SK-N-SH (cell line): ENCODE measurements at regions of chr20 and their contacts with region 1.

Region 1: GRCh38 chr20:53547664-53548239 is 45.9 kb downstream of the ZNF217 start:
- DNase-seq: peak; percentile 71
- H3K4me3 ChIP-seq: peak overlapping the region in 1 of 2 experiments; percentile 9; a peak in 1 of 4 replicates
- H3K27ac ChIP-seq: 0 out of 4 replicates have a peak overlapping the region, but pooled peaks of 1 of the 2 experiments have one; percentile 3
- H3K4me1 ChIP-seq: peaks cover 0 to 4% of the 10 kb centered on the region in 2 experiments; a peak in 1 of 4 replicates
- H3K27me3 ChIP-seq: no peaks in the 10 kb centered on the region
- CTCF ChIP-seq: peak; percentile 81
- EP300 ChIP-seq: no peak; a peak in 1 of 4 replicates
- RAD21 ChIP-seq: peak; percentile 98

Region 2: DNA sequence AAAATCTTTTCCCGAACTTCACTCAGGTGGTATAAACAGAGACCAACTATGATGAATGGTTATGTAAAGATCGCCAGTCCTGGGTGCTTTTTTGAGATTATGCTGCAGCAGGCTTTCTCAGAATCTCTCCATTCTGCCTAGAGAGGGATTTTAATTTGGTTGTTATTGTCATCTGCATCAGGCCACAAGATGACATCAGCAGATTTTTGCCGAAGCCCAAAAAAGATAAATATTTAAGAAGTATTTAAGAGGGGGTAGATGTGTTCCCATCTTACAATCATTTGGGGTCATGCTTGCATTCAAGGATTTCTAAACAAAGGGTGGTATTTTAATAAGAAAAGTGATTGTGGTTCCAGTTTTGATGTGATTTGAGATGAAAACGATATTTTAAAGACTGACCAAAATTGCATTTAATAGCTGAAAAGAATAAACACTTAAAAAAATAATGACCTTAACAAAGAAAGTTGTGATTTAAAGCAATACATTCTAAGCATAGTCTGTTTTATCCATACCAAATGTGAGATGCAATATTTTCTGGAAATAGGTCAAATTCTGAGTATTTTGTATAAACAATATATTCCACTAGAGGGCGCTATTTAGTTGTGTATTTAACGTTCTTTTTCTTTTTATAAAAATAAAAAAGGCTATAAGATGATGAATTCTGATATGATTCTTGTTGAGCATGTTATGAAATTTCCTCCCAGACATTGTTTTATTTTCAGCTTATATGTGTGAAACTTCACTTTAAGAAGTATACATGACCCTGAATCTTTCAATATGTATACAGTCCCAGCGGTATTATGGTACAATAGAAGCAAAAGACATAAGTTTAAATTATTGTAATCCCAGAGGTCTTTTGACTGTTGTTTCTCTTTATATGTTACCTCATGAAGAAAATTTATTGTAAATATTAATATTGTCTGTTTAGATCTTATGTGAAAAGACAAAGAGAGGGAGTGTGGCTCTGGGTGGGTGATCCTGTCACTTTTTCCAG is 1305.2 kb before region 1 on chr20:
- CTCF ChIA-PET with region 1: interaction called, 12 read pairs
- POLR2A ChIA-PET with region 1: no interaction called
- DNase-seq: peak; percentile 29
- H3K4me3 ChIP-seq: no peak overlapping the region
- H3K27ac ChIP-seq: no peak overlapping the region
- H3K4me1 ChIP-seq: no peaks in the 10 kb centered on the region; a peak in 2 of 4 replicates
- H3K27me3 ChIP-seq: no peaks in the 10 kb centered on the region; the same call in 1 of the 2 replicates
- CTCF ChIP-seq: peak; percentile 79
- EP300 ChIP-seq: no peak
- RAD21 ChIP-seq: peak; percentile 61

Region 3: DNA sequence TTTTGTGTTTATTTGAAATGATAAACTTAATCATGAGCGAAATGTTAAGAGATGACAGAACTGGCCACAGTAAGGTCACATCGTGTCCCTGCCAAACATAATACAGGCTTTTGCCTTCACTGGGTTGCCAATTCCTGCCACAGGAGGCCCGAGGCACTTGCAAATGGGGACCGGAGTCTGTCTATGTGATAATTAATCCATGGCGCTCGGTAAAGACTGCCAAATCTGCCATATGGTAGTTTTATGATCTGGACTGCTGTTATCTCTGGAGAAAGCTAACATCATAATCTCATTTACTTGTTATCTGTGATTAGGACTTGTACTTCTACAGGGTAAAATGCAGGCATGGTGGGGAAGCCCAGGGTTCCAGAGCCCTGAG is 746.1 kb before region 1 on chr20:
- CTCF ChIA-PET with region 1: interaction called, 13 read pairs
- POLR2A ChIA-PET with region 1: no interaction called
- DNase-seq: peak; percentile 50
- H3K4me3 ChIP-seq: no peak overlapping the region
- H3K27ac ChIP-seq: peak overlapping the region in 1 of 2 experiments; percentile 86; a peak in 2 of 4 replicates
- H3K4me1 ChIP-seq: peaks cover 0 to 16% of the 10 kb centered on the region in 2 experiments; a peak in 2 of 4 replicates
- H3K27me3 ChIP-seq: no peaks in the 10 kb centered on the region
- CTCF ChIP-seq: no peak
- EP300 ChIP-seq: peak in 1 of 2 experiments; percentile 93; a peak in 2 of 4 replicates
- RAD21 ChIP-seq: peak; percentile 41; the same call in 1 of the 2 replicates

Region 4: GRCh38 chr20:53493311-53493864 is 54.4 kb before region 1 on chr20:
- CTCF ChIA-PET with region 1: interaction called, 16 read pairs
- POLR2A ChIA-PET with region 1: no interaction called
- DNase-seq: peak; percentile 34
- H3K4me3 ChIP-seq: no peak overlapping the region
- H3K27ac ChIP-seq: peak overlapping the region in 1 of 2 experiments; percentile 64; a peak in 2 of 4 replicates
- H3K4me1 ChIP-seq: peaks cover 0 to 19% of the 10 kb centered on the region in 2 experiments; a peak in 3 of 4 replicates
- H3K27me3 ChIP-seq: no peaks in the 10 kb centered on the region
- CTCF ChIP-seq: no peak
- EP300 ChIP-seq: peak in 1 of 2 experiments; percentile 96; a peak in 2 of 4 replicates
- RAD21 ChIP-seq: peak; percentile 79

Region 5: DNA sequence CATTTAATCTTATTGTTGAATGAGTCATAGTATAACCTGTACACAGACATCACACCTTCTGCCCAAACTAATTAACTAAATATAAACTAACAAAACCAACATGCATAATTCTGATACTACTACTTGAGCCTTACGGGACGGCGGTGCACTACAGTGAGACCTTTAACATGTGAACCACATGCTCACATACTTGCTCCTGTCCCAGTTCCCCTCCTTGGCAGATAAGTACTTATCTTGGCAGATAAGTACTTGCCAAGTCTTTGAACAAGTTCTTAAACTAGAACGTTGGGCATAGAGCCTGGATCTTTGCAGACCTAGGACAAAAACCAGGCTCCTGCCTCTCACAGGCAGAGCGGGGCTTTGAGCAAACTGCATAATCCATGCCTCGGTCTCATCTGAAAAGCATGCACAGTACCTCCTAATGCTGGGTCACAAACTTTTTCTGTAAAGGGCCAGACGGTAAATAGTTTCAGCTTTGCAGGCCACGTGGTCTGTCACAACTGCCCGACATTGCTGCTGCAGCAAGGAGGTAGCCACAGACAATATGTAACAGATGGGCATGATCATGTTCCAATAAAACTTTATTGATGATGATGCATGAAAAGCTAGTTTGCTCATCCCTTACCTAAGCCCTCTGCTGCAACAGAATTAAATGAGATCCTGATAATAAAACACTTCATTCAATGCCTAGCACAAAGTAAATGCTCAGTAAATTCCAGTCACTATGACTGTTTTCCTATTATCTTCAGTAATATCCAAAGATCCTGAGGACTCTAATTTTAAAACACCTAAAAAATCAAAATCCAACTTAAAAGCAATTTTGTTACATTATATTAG is 23.0 kb after region 1 on chr20:
- CTCF ChIA-PET with region 1: no interaction called
- POLR2A ChIA-PET with region 1: no interaction called
- DNase-seq: no peak
- H3K4me3 ChIP-seq: no peak overlapping the region
- H3K27ac ChIP-seq: no peak overlapping the region; a peak in 1 of 4 replicates
- H3K4me1 ChIP-seq: peaks cover 0 to 4% of the 10 kb centered on the region in 2 experiments; a peak in 1 of 4 replicates
- H3K27me3 ChIP-seq: no peaks in the 10 kb centered on the region
- CTCF ChIP-seq: no peak
- EP300 ChIP-seq: no peak
- RAD21 ChIP-seq: no peak

Region 6: DNA sequence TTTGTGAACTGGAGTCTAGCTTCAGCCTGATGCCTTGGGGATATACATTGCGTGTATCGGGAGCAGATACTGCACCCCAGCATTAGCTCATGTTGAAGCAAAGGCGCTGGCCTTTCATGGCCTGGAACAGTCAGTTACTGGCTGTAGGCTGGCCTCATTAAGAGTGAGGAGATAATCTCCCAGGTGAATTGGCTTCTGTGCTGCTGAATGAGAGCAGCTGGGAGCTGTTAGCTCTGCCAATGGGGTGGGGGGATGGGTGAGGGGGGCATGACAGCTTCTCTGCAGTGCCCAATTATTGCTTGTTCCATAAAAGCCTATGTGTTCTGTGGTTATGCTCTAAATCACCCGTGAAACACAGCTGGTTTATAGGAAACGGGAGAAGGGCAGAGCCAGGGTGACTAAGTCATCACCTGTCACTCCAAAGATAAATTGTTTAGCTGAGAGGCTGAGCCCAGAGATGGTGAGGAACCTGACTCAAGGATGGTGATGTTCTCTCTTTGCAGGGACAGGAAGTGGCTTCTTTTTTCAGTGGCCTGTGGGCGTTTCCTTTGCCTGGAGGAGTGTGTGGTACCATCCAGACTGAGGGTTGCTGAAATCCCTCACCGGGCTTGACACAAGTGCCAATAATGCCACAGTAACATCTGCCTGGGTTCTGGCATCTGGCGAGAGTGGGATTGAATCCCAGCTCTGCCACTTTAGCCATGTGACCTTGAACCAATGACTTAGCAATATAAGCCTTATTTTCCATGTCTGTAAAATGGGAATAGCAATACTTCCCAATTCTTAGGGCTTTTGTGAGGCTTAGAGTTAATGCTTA is 351.8 kb after region 1 on chr20:
- CTCF ChIA-PET with region 1: no interaction called
- POLR2A ChIA-PET with region 1: no interaction called
- DNase-seq: peak; percentile 38
- H3K4me3 ChIP-seq: no peak overlapping the region
- H3K27ac ChIP-seq: peak overlapping the region; percentile 44 to 99
- H3K4me1 ChIP-seq: peaks cover 31 to 36% of the 10 kb centered on the region in 2 experiments
- H3K27me3 ChIP-seq: no peaks in the 10 kb centered on the region
- CTCF ChIP-seq: no peak
- EP300 ChIP-seq: peak; percentile 59 to 93
- RAD21 ChIP-seq: no peak; the same call in 1 of the 2 replicates